SK-N-SH (cell line): ENCODE measurements at regions of chr6 and their contacts with region 1.

Region 1: GRCh38 chr6:157756708-157757429 is 66.2 kb upstream of the SNX9 start:
- DNase-seq: peak; percentile 79
- H3K4me3 ChIP-seq: peak overlapping the region in 1 of 2 experiments; percentile 29; a peak in 1 of 4 replicates
- H3K27ac ChIP-seq: peak overlapping the region in 1 of 2 experiments; percentile 45; a peak in 1 of 4 replicates
- H3K4me1 ChIP-seq: peaks cover 15 to 18% of the 10 kb centered on the region in 2 experiments; a peak in 3 of 4 replicates
- H3K27me3 ChIP-seq: no peaks in the 10 kb centered on the region
- CTCF ChIP-seq: peak; percentile 76
- EP300 ChIP-seq: no peak
- RAD21 ChIP-seq: peak; percentile 84

Region 2: DNA sequence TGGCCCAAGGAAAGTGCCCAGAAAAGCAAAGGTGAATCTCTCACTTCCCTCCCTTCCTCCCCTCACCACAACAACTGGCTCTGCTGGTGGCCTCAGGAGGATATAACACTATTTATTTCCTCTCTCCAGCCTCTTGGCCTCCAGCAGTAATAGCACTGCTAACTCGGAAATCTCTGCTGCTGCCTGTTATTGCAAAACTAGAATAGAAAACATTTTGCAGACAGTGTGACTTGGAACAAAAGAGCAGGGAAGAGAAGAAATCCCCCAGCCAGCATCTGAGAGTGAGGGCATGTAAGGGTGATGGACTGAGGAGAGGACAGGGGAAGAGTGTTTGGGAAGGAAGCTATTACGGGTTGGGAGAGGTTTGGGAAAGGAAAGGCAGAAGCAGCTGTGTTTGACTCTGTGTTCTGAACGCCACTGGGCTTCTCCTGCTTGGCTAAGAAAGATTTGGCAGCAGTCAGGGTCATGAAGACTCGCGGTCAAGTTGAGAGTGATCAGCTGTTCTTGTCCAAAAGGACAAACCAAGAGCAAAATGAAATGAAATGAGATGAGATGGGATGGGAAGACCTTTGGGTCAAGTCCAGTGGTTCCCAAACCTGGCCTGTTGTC is 14.8 kb before region 1 on chr6:
- CTCF ChIA-PET with region 1: interaction called, 22 read pairs
- POLR2A ChIA-PET with region 1: no interaction called
- DNase-seq: no peak
- H3K4me3 ChIP-seq: no peak overlapping the region
- H3K27ac ChIP-seq: no peak overlapping the region
- H3K4me1 ChIP-seq: peaks cover 0 to 2% of the 10 kb centered on the region in 2 experiments; a peak in 1 of 4 replicates
- H3K27me3 ChIP-seq: no peaks in the 10 kb centered on the region
- CTCF ChIP-seq: no peak
- EP300 ChIP-seq: no peak
- RAD21 ChIP-seq: no peak

Region 3: GRCh38 chr6:157873735-157874344 is 117.0 kb after region 1 on chr6:
- CTCF ChIA-PET with region 1: interaction called, 18 read pairs
- POLR2A ChIA-PET with region 1: no interaction called
- DNase-seq: peak; percentile 71
- H3K4me3 ChIP-seq: no peak overlapping the region; a peak in 1 of 4 replicates
- H3K27ac ChIP-seq: no peak overlapping the region
- H3K4me1 ChIP-seq: peaks cover 0 to 2% of the 10 kb centered on the region in 2 experiments; a peak in 1 of 4 replicates
- H3K27me3 ChIP-seq: no peaks in the 10 kb centered on the region
- CTCF ChIP-seq: peak; percentile 87
- EP300 ChIP-seq: no peak
- RAD21 ChIP-seq: peak; percentile 75

Region 4: DNA sequence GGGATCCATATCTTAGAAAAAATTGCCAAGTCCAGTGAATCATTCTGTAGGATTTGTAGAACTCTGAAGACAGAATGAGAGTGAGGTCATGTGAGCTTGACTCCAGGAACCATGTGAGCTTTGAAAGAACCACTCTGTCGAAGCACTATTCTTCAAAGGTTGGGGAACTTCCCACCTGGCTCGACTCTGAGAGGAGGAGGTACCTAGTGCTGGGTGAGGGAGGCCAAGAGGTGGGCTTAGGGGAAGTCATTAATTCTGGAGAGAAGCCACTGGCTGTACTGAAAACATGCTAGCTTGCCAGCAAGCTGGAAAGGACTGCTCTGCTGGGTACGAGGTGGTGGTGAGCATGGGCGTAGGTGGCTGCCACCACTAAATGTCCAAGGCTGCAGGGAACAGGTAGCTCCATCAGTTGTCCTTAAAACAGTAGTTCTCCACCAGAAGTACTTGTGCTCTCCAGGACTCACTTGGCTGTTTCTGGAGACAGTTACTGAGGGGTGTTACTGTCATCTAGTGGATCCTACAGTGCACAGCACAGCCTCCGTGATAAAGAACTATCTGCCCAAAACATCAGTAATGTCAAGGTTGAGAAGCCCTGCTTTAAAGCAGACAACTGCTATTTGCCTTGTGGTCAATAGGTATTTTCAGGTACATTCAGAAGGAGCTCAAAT is 190.1 kb after region 1 on chr6:
- CTCF ChIA-PET with region 1: interaction called, 14 read pairs
- POLR2A ChIA-PET with region 1: no interaction called
- DNase-seq: peak; percentile 40
- H3K4me3 ChIP-seq: no peak overlapping the region
- H3K27ac ChIP-seq: no peak overlapping the region
- H3K4me1 ChIP-seq: no peaks in the 10 kb centered on the region
- H3K27me3 ChIP-seq: no peaks in the 10 kb centered on the region
- CTCF ChIP-seq: peak; percentile 55
- EP300 ChIP-seq: no peak
- RAD21 ChIP-seq: peak; percentile 67

Region 5: DNA sequence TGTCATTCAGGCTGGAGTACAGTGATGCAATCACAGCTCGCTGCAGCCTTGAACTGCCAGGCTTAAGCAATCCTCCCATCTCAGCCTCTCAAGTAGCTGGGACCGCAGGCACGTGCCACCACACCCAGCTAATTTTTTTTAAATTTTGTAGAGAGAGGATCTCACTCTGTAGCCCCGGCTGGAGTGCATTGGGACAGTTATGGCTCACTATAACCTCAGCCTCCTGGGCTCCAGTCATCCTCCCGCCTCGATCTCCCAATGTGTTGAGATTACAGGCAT is 324.7 kb after region 1 on chr6:
- CTCF ChIA-PET with region 1: interaction called, 14 read pairs
- POLR2A ChIA-PET with region 1: no interaction called
- DNase-seq: no peak
- H3K4me3 ChIP-seq: no peak overlapping the region
- H3K27ac ChIP-seq: no peak overlapping the region
- H3K4me1 ChIP-seq: no peaks in the 10 kb centered on the region
- H3K27me3 ChIP-seq: no peaks in the 10 kb centered on the region
- CTCF ChIP-seq: no peak
- EP300 ChIP-seq: no peak
- RAD21 ChIP-seq: no peak